PC-9 (cell line): ENCODE measurements at regions of chr6 and their contacts with region 1.

Region 1: DNA sequence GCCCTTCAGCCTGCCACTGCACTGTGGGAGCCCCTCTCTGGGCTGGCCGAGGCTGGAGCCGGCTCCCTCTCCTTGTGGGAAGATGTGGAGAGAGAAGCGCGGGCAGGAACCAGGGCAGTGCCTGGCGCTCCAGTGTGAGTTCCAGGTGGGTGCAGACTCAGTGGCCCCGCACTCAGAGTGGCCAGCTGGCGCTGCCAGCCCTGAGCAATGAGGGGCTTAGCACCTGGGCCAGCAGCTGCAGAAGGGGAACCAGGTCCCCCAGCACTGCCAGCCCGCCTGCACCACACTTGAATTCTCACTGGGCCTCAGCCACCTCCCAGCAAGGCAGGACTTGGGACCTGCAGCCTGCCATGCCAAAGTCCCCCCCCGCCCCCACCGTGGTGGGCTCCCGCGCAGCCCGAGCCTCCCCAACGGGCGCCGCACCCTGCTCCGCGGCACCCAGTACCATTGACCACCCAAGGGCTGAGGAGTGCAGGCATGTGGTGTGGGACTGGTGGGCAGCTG is 205.9 kb downstream of the CLVS2 start:
- DNase-seq: no peak
- H3K4me3 ChIP-seq: no peak overlapping the region
- H3K27ac ChIP-seq: no peak overlapping the region
- H3K4me1 ChIP-seq: no peaks in the 10 kb centered on the region
- H3K27me3 ChIP-seq: no peaks in the 10 kb centered on the region
- CTCF ChIP-seq: no peak

Region 2: GRCh38 chr6:123953920-123954319 is 752.0 kb after region 1 on chr6:
- CTCF ChIA-PET with region 1: no interaction called
- POLR2A ChIA-PET with region 1: interaction called, 11 read pairs
- intact Hi-C with region 1: no loop called
- DNase-seq: no peak
- H3K4me3 ChIP-seq: no peak overlapping the region
- H3K27ac ChIP-seq: no peak overlapping the region
- H3K4me1 ChIP-seq: no peaks in the 10 kb centered on the region
- H3K27me3 ChIP-seq: no peaks in the 10 kb centered on the region
- CTCF ChIP-seq: no peak